Cardiac septum (tissue), 1 donor: ENCODE measurements at regions of chr5 and their contacts with region 1.

Region 1: DNA sequence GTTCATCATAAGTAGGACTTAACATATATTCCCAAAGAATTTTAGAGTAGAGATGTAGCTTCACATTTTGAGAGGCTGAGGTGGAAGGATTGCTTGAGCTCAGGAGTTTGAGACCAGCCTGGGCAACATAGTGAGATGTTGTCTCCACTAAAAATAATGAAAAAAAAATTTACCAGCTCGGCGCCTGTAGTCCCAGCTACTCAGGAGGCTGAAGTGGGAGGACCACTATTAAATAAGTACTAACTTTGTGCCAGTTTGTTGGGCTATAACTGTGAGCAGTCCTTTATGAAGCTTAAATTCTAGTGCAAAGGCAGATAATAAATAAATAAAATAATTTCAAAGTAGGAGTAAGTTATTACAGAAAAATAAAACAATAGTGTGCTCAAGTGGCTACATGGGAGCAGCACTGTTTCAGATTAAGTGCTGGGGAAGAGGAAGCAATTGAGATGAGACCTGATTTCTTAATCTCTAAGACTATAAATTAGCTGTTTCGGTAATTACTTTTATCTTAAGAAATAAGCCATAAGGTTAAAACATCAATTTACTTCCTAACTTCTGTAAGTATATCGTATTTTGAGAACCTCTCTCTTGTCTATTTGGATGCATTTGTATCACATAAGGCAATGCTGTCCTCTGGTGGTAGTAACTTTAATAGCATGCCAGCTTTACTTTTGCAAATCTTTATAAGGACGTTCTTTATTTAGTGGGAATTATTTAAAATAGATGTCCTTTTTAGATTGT is 98.9 kb downstream of the CSNK1G3 start:
- DNase-seq: no peak

Region 2: GRCh38 chr5:122515709-122516431 is 1095.0 kb before region 1 on chr5:
- intact Hi-C with region 1: loop called (anchors 10 kb)
- DNase-seq: no peak

Region 3: DNA sequence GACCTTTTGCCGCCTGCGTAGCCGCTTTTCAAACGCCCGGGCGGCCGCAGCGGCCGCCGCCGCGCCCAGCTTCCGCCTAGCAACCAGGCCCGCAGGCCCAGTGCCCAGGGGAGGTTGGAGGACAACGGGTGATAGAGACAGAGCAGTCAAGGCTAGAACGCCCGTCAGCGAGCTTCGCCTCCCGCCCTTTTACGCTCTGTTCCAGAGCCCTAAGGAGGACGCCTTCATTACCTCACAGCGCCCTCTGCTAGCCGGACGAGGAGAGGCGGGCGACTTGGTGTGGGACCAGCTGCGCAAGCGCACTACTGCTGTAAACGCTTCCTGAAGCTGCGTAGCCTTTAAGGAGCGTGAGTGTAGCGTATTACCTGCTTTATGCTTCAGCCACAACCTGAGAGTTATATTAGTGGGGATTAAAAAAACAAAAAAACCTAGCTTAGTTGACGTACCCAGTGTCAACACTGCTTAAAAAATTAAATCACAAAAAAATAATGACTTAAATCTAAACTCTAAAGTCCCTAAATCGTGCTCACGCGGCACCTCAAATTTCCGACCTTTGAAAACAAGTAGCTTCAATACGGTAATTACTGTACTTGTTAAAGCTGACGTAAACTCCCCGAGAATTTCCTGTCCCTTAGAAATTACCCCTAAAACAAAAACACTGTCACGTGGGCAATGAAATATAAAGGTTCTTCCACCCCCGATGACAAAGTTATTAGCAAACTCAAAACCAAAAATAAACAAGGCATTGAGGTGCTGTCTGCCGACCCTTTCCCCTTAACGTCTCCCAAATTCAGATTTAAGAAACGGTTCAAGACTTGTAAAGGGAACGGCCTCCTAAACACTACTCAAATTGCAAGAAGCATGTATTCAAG is 187.3 kb before region 1 on chr5 and contains the start of gene CEP120:
- intact Hi-C with region 1: loop called (anchors 2 kb)
- DNase-seq: peak; percentile 99
- total RNA-seq, gene CEP120: 10.2 TPM